BJ (cell line): ENCODE measurements at regions of chr15 and their contacts with region 1.

Region 1: DNA sequence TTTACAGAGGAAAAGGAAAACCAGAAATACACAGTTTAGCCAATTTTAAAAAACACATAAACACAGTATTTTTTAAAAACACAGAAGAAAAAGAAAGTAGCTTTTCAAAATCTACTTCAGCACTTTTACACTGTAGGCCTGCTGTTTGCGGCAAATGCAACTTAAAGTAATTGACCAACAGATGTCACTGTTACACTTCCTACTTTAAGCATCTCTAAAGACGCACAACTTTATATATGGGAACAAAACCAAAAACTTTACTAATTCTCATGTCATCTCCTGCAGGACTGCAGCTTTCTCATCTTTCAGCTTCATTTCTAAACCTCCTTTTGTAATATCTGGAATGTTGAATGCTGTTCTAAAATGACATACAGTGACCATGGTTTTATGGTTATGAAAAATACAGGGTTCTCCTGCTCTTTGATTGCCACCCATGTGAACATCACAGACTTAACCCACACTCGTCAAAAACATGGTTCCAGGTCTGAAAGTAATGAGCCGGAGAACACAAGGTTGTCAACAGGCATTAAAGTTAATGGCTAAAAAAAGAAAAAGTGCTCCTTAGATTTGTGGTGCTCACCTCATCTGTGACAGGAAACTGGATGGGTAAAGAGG is 107.9 kb downstream of the FMN1 start:
- DNase-seq: peak; percentile 30
- H3K4me3 ChIP-seq: no peak overlapping the region
- H3K27me3 ChIP-seq: no peaks in the 10 kb centered on the region
- CTCF ChIP-seq: peak; percentile 67

Region 2: GRCh38 chr15:33021806-33022389 is 64.7 kb before region 1 on chr15:
- CTCF ChIA-PET with region 1: interaction called, 10 read pairs
- POLR2A ChIA-PET with region 1: no interaction called
- DNase-seq: no peak
- H3K4me3 ChIP-seq: no peak overlapping the region
- H3K27me3 ChIP-seq: no peaks in the 10 kb centered on the region
- CTCF ChIP-seq: peak; percentile 63

Region 3: GRCh38 chr15:33098094-33099040 is 11.8 kb after region 1 on chr15:
- CTCF ChIA-PET with region 1: interaction called, 24 read pairs
- POLR2A ChIA-PET with region 1: no interaction called
- DNase-seq: no peak
- H3K4me3 ChIP-seq: no peak overlapping the region
- H3K27me3 ChIP-seq: no peaks in the 10 kb centered on the region
- CTCF ChIP-seq: no peak

Region 4: GRCh38 chr15:33104212-33104611 is 17.6 kb after region 1 on chr15:
- CTCF ChIA-PET with region 1: interaction called, 24 read pairs
- POLR2A ChIA-PET with region 1: no interaction called
- DNase-seq: peak; percentile 74
- H3K4me3 ChIP-seq: no peak overlapping the region
- H3K27me3 ChIP-seq: no peaks in the 10 kb centered on the region
- CTCF ChIP-seq: no peak